Uterus (tissue), 4 donors: ENCODE measurements at regions of chr1 and their contacts with region 1.

Region 1: DNA sequence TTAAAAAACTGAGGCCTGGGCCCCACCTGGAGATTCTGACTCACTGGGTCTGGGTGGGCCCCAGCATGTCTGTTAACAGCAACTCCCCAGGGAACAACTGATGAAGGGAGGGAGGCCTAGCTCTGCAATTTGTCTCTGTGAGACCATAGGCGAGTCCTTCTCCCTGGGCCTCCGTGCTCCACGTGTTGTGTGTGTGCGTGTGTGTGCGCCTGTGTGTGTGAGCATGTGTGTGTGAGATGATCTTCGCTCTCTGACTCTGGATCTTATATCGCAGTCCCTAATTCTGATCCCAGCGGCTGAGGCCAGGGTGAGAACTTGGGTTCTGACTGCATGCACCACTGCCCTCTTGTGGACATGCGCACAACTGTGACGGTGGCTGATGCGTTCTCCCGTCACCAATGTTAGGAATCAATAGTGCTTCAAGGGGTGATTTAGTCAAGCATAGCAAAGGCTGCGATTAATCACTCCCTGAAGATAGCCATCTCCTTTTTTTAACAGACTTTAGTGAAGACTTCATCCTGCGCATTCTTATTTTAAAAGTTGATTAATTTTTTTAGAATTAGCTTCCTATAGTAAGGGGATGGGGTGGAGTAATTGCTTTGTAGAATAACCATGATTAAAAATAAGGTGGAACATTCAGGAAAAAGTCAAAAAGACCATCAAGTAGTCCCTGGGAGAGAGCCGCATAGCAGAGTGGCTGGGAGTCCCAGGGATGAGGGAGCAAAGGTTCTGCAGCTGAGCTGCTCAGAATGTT is 62.4 kb upstream of the USP24 start:
- DNase-seq: peak; percentile 76 to 77
- H3K4me3 ChIP-seq: no peak overlapping the region
- H3K27ac ChIP-seq: no peak overlapping the region
- H3K4me1 ChIP-seq: no peaks in the 10 kb centered on the region
- H3K27me3 ChIP-seq: no peaks in the 10 kb centered on the region
- CTCF ChIP-seq: peak; percentile 67 to 87 (median 84)
- POLR2A ChIP-seq: no peak

Region 2: DNA sequence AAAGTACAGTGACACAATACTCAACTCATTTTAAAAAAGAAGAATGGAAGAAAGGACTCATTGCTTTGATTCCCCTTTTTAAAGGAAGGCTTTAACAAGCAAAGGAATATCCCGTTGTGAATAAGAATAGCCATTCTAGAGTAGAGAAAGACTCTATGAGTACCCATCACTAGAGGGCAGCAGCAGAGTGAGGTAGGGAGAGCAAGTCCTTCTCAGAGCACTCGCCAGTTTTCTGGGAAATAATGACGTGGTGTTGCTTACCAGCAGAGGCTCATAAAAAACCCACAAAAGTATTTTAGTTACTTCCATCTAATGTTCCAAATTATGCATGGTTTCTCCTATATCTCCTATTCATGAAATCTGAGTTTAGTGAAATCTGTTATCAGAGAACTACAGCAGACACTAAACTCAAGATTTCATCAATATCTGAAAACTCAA is 137.0 kb before region 1 on chr1:
- intact Hi-C with region 1: loop called (anchors 10 kb)
- DNase-seq: peak; percentile 58 to 83
- H3K4me3 ChIP-seq: no peak overlapping the region
- H3K27ac ChIP-seq: peak overlapping the region in 1 of 2 donors; percentile 51
- H3K4me1 ChIP-seq: no peaks in the 10 kb centered on the region
- H3K27me3 ChIP-seq: no peaks in the 10 kb centered on the region
- CTCF ChIP-seq: peak; percentile 77 to 84 (median 80)
- POLR2A ChIP-seq: no peak

Region 3: GRCh38 chr1:55362558-55362957 is 85.0 kb after region 1 on chr1:
- intact Hi-C with region 1: no loop called
- DNase-seq: peak in 1 of 2 donors; percentile 27
- H3K4me3 ChIP-seq: no peak overlapping the region
- H3K27ac ChIP-seq: peak overlapping the region; percentile 59 to 72
- H3K4me1 ChIP-seq: no peaks in the 10 kb centered on the region
- H3K27me3 ChIP-seq: no peaks in the 10 kb centered on the region
- CTCF ChIP-seq: no peak
- POLR2A ChIP-seq: no peak